ENCODE measurements at regions of chr9 and their contacts with region 1.

Region 1: DNA sequence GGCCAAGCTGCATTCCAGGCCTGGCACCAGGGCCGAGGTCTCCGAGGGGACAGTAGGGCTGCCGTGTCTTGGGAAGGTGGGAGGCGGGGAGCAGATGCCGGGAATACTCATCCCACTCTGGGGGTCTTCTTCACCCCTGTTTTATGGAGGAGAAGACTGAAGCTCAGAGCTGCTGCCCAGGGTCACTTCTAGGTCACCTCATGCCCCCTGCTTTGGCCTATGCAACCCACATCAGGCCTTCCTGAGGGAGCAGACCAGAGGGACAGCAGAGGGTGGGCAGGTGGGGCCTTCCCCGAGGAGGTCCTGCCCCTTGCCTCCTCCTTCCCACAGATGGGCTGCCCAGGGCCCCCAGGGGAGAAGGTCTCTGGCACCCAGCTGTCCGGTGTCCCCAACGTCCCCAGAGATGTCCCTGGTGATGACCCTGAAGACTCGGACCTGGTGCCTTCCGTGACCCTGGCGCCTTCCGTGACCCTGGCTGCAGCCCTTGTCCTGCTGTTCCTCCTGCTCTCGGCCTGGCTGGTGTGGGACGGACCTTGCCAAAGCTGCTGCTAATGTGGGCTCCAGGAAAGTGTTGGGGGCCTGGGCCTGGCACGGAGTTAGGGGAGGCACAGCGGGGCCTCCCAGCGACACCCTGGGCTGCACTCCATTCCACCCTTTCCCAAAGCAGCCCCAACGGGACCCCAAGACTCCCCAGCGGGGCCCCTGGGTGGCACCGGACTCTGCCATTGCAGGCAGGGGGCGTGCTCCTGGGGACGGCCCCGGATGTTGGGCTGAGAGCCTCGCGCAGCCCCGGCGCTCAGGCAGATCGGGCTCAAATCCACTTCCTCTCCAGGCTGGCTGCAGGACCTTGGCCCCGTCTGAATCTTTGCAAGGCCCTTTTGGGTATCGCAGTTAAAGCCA is 6.7 kb upstream of the SLC2A6 start:
- DNase-seq: no peak
- H3K4me3 ChIP-seq: no peak overlapping the region
- H3K27ac ChIP-seq: no peak overlapping the region
- H3K4me1 ChIP-seq: no peaks in the 10 kb centered on the region
- H3K27me3 ChIP-seq: no peaks in the 10 kb centered on the region
- CTCF ChIP-seq: no peak
- POLR2A ChIP-seq: no peak

Region 2: DNA sequence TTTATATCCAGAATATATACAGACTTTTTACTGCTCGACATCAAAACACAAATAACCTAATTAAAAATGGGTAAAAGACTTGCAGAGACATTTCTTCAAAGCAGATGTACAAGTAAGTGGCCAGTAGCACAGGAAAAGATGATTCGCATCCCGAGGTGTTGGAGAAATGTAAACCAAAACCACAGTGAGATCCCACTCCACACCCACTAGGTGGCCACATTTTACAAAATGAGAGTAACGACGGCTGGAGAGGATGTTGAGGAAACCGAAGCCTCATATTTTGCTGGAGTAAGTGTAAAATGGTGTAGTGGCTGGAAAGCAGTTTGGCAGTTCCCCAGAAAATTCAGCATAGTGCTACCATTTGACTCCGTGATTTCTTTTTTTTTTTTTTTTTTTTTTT is 300.6 kb before region 1 on chr9:
- intact Hi-C with region 1: loop called (anchors 5 kb)
- DNase-seq: peak; percentile 34 to 46
- H3K4me3 ChIP-seq: no peak overlapping the region
- H3K27ac ChIP-seq: no peak overlapping the region
- H3K4me1 ChIP-seq: no peaks in the 10 kb centered on the region
- H3K27me3 ChIP-seq: no peaks in the 10 kb centered on the region
- CTCF ChIP-seq: peak; percentile 42 to 81 (median 60)
- POLR2A ChIP-seq: no peak

Region 3: DNA sequence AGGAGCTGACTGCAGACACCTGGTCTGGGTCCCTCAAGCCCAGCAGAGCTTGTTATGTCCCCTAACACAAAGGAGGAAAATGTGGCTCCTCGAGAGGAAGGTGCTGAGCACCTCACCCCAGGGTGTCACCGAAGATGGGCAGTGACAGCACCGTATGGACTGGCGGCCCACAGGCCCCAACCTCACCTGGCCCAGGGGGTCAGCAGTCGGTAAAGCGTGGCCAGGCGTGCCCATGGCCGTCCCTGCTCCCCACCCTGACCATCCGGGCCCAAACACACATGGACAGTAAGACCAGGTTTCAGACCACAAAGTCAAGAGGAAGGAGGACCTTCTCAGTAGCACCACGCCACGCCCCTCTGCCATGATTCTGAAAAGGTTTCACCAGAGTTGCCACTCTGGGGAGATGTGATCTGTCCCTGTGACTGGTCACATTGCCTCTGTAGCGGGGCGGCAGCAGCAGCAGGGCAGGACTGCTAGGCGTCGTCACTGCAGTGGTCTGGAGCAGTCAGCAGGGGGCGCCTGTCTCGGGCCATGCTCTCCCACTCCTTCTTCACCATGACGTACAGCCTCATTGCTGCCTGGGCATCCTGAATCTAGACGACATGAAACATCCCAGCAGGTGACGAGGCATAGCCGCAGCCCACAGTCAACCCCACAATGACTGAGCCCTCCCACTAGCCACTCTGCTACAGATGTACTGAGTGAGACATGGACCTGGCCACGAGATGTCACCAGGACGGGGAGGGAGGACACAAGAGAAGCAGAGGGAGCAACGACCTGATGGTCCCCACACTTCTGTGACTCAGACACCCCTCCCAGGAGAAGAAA is 78.9 kb before region 1 on chr9:
- intact Hi-C with region 1: loop called (anchors 5 kb)
- DNase-seq: peak; percentile 60 to 62
- H3K4me3 ChIP-seq: no peak overlapping the region
- H3K27ac ChIP-seq: no peak overlapping the region
- H3K4me1 ChIP-seq: no peaks in the 10 kb centered on the region
- H3K27me3 ChIP-seq: no peaks in the 10 kb centered on the region
- CTCF ChIP-seq: peak; percentile 66 to 82 (median 80)
- POLR2A ChIP-seq: no peak